ENCODE measurements at regions of chr16 and their contacts with region 1.

Region 1: DNA sequence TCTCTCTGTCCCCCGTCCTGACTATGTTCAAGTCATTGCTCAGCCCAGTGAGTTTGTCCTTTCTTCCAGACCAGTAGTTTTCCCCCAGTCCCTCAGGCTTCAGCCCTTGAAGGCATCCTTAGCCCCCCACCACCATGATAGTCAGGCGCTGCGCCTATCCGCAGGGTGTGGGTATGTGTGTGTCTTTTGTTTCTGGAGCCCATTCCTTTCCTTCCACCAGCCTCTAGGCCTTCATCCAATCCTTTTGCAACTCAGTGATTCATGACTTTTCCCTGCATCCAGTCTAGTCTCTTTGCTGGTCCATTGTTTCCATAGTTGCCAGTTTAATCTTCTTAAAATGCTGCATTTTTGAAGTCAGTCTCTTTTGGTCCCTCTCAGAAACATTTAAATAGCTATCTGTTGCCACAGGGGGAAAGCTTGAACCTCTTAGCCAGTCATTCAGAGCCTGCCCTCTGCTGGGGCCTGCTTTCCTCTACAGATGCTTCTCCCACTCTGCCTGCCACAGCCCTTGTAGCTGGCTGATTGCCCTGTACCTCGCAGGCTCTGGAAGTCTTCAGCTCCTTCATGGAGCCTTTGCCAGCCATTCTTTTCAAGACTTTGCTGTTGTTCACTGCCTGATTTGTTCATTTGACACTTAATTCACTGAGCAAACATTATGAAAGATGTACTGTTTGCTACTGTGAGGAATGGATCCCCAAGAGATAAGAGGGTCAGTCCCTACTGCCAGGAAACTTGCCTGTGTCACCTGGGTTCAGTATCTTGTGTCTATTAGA is 55.9 kb upstream of the ADCY7 start:
- DNase-seq: peak; percentile 51 to 82 (median 66)
- ATAC-seq: peak; percentile 100
- H3K4me3 ChIP-seq: no peak overlapping the region
- H3K27ac ChIP-seq: no peak overlapping the region
- H3K4me1 ChIP-seq: no peaks in the 10 kb centered on the region; a peak in 1 of 5 replicates
- H3K27me3 ChIP-seq: no peaks in the 10 kb centered on the region
- CTCF ChIP-seq: peak; percentile 84 to 97 (median 93)
- EP300 ChIP-seq: no peak
- POLR2A ChIP-seq: no peak
- RAD21 ChIP-seq: peak; percentile 82 to 92

Region 2: GRCh38 chr16:49959563-49960282 is 250.7 kb before region 1 on chr16:
- CTCF ChIA-PET with region 1: no interaction called
- POLR2A ChIA-PET with region 1: no interaction called
- in situ Hi-C with region 1: no loop called
- intact Hi-C with region 1: loop called (anchors 5 kb)
- DNase-seq: no peak
- ATAC-seq: no peak
- H3K4me3 ChIP-seq: no peak overlapping the region
- H3K27ac ChIP-seq: no peak overlapping the region
- H3K4me1 ChIP-seq: no peaks in the 10 kb centered on the region; a peak in 1 of 5 replicates
- H3K27me3 ChIP-seq: peaks cover 8 to 52% of the 10 kb centered on the region in 2 experiments
- CTCF ChIP-seq: no peak
- EP300 ChIP-seq: no peak
- POLR2A ChIP-seq: no peak
- RAD21 ChIP-seq: no peak

Region 3: GRCh38 chr16:50065624-50066481 is 144.6 kb before region 1 on chr16 and contains the start of gene HEATR3:
- CTCF ChIA-PET with region 1: interaction called, 3 read pairs
- POLR2A ChIA-PET with region 1: no interaction called
- in situ Hi-C with region 1: no loop called
- intact Hi-C with region 1: loop called (anchors 1 kb)
- DNase-seq: peak; percentile 95 to 97 (median 96)
- ATAC-seq: peak; percentile 94
- H3K4me3 ChIP-seq: peak within 1 kb of the TSS; percentile 89
- H3K27ac ChIP-seq: peak within 1 kb of the TSS; percentile 79
- H3K4me1 ChIP-seq: peaks cover 16 to 25% of the 10 kb centered on the region in 2 experiments; a peak in 4 of 5 replicates
- H3K27me3 ChIP-seq: no peaks in the 10 kb centered on the region
- CTCF ChIP-seq: no peak
- EP300 ChIP-seq: no peak
- POLR2A ChIP-seq: peak; percentile 81
- RAD21 ChIP-seq: no peak
- polyA plus RNA-seq, gene HEATR3: 1.7 to 3.7 TPM

Region 4: DNA sequence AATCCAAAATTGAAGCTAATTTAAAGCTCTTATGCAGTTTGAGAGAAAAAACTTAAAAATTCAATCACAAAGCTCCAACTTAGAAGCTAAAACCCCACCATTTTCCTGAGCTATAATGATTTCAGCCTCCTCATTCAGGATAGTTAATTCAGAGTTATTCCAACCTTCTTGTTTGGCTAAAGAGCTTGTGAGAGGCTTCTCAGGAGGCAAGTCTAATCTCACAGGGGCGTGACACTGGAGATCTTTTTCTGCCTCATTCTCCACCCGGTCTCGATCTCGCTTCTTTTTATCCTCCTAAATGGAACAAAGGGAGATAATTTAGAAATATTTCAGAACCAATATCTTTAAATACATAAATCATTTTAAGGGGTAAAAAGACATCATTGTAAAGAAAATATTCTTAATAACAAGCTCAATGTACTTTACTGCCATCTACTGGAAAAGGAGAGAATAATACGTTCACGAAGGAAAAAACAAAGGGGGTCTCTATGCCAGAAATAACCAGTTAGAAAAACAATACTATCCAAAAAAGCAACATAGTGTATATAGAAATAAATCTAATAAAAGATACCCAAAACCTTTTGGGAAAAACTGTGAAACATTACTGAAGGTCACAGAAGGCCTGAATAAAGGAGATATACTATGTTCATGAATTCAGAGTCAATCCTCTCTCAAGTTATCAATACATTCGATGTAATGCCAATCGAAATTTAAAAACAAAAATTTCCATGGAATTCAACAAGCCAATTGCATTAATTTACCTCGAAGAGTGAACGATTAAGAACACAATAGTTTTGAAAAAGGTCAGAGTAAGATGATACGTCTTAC is 144.4 kb after region 1 on chr16:
- CTCF ChIA-PET with region 1: interaction called, 9 read pairs
- POLR2A ChIA-PET with region 1: no interaction called
- in situ Hi-C with region 1: loop called (anchors 10 kb)
- intact Hi-C with region 1: loop called (anchors 1 kb)
- DNase-seq: peak in 3 of 4 experiments; percentile 30 to 34 (median 34)
- ATAC-seq: no peak
- H3K4me3 ChIP-seq: no peak overlapping the region
- H3K27ac ChIP-seq: no peak overlapping the region
- H3K4me1 ChIP-seq: no peaks in the 10 kb centered on the region
- H3K27me3 ChIP-seq: no peaks in the 10 kb centered on the region
- CTCF ChIP-seq: peak in 2 of 3 experiments; percentile 32 to 67; a peak in 3 of 6 replicates
- EP300 ChIP-seq: no peak
- POLR2A ChIP-seq: no peak
- RAD21 ChIP-seq: peak; percentile 62 to 69

Region 5: DNA sequence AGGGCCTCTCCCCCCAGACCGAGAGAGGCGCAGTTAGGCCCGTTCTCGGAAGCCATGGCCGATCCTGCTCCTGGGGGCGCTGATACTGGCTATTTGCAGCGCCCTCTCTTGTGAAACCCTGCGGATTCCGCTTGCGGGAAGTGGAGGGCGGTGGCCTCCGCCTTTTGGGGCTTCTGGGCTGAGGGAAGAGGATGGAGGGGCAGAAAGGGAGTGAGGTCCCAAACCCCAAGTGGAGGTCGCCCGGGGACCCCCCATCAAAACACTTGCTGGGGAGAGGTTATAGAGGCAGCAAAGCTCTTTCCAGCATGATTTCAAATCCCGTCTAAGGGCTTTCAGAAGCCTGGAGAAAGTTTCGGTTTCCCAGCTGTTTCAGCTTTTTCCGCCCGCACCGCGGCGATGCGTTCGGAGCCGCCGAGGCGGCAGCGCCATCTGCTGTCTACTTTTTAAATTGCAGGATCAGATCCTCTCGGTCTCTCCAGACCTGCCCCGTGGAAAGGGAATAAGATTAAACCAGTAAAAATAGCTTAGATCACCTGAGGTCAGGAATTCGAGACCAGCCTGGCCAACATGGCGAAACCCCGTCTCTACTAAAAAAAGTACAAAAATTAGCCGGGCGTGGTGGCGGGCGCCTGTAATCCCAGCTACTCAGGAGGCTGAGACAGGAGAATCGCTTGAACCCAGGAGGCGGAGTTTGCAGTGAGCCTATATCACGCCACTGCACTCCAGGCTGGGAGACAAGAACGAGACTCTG is 454.9 kb after region 1 on chr16:
- CTCF ChIA-PET with region 1: interaction called, 13 read pairs
- POLR2A ChIA-PET with region 1: no interaction called
- in situ Hi-C with region 1: no loop called
- intact Hi-C with region 1: loop called (anchors 2 kb)
- DNase-seq: peak; percentile 69 to 80 (median 77)
- ATAC-seq: peak; percentile 94
- H3K4me3 ChIP-seq: no peak overlapping the region; the same call in 1 of the 2 replicates
- H3K27ac ChIP-seq: no peak overlapping the region
- H3K4me1 ChIP-seq: peaks cover 0 to 5% of the 10 kb centered on the region in 2 experiments; a peak in 2 of 5 replicates
- H3K27me3 ChIP-seq: peaks cover 4 to 14% of the 10 kb centered on the region in 2 experiments; a peak in 3 of 5 replicates
- CTCF ChIP-seq: peak; percentile 84 to 93 (median 92)
- EP300 ChIP-seq: no peak
- POLR2A ChIP-seq: no peak
- RAD21 ChIP-seq: peak; percentile 87 to 89

Measured in K562 (cell line).